Posterior vena cava (tissue), 2 donors: ENCODE measurements at regions of chrX and their contacts with region 1.

Region 1: DNA sequence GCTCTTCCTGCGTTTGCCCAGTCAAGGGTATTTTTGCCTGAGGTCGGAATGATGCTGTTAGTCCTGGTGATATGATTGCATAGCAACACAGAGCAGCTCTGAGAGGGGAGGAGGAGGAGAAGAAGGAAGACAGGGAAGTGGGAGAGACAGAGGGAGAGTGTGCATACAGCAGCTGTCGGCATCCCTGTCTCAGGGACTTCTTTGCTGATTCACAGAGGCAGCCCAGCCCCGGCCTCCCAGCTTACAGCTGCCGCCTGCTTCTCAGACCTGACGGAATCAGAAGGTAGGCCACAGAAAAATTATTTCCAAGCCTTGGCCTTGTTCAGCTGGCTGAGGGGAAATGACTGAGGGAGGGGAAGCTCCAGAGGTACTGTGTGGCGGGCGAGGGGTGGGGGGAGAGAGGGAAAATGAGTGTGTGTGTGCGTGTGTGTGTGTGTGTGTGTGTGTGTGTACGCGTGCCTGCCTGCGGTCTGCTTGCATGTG is 319 bp downstream of the DRP2 start:
- DNase-seq: no peak

Region 2: DNA sequence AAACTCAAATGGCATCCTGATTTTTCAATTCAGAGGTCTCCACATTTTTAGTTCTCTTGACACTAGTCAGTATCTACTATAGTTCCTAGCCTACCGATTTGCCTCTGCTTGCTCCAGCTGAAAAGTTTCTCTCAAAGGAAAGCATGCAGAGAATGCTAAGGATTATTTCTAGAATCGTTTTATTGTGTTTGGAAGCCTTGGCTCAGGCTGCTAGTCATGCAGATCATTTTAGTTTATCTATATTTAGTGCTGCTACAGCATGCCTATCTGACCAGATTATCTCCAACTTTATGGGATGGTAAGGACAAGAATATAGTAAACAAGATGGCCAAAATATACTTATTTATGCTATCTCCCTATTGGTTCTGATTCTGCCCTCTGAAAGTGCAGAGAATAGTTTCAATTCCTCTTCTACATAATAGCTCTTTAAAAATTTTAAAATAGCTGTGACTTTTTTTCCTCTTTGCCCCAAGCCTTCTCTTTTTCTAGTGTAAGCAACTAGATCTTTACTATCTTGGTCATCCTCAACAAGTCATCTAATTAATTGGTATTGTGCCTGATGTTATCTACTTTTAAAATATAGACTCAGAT is 16.0 kb before region 1 on chrX:
- intact Hi-C with region 1: loop called in 1 of 2 experiments (anchors 1 kb)
- DNase-seq: no peak